Right ventricle myocardium inferior (tissue), 1 donor: ENCODE measurements at regions of chr18 and their contacts with region 1.

Region 1: DNA sequence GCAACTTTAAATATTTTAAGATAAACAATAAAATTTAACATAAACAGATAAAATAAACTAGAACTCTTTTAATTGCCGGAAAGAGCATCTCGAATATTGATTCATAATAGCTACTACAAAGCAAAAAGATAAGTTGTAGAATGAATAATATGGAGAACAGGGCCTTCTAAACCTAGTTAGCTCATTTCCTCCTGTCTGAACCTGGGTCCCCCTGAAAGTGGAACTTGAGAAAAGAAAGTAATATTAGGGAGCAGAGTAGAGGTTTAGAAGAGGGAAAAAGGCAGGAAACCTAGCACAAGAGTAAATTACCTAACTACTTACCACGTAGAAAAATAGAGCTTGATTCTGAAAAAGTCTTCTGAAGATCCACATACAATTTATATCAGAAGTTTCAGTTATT is 80.7 kb upstream of the NETO1 start:
- DNase-seq: no peak
- ATAC-seq: no peak

Region 2: DNA sequence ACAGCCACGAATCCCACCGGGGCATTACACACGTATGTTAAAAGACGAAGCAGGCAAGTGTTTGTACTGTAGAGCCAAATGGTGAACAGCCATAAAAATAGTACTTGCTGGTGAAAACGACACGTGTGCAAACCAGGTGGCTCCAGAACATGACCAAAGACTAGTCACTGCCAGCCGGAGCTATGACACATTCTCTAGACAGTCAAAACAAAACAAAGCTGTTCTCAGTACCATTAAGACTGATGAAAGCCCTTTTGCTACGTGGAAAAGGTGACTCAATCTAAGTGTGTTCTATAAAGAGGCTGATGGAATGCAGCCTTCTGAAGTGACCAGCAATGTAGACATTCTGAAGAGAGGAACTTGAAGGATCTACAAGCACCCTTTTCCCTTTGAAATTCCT is 287.1 kb after region 1 on chr18:
- intact Hi-C with region 1: no loop called
- DNase-seq: no peak
- ATAC-seq: no peak

Region 3: GRCh38 chr18:73696698-73697097 is 748.3 kb after region 1 on chr18:
- intact Hi-C with region 1: loop called (anchors 5 kb)
- DNase-seq: no peak
- ATAC-seq: no peak